HEK293 (cell line): ENCODE measurements at regions of chr20 and their contacts with region 1.

Region 1: DNA sequence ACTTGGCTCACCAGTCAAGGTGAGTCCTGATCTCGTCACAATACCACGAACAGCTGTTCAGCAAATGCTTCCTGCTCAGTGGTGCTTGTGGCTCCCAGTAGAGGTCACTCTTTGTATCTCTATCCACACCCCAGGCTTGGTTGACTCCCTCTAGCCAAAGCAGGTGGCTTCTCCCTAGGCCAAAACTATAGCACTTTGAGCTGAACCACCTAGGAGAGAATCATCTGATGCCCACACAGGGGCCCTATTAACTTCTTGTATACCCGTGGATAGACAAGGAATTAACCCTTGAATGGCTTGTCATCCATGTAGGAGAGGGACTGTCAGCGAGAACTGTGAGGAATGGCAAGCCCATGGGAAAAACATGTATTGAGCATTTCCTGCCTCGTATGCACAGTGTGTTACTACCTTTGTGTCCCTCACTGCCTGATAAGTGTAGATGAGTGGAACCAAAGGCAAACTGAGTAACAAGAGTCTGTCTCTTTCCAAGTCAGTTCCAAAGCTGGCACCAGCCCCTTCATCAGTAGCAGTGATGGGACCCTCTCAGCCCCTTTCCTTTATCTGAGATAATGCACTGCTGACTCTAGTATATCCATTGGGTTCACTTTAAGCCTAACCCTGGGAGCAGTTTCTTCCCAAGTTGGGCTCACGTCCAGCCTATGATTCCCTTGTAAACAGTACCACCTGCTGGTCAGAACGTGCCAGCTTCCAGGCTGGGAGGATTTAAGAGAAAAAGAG is 42.5 kb downstream of the EIF2S2 start:
- H3K4me3 ChIP-seq: no peak overlapping the region
- H3K27ac ChIP-seq: no peak overlapping the region
- H3K4me1 ChIP-seq: no peaks in the 10 kb centered on the region
- CTCF ChIP-seq: peak; percentile 62; the same call in 1 of the 2 replicates

Region 2: DNA sequence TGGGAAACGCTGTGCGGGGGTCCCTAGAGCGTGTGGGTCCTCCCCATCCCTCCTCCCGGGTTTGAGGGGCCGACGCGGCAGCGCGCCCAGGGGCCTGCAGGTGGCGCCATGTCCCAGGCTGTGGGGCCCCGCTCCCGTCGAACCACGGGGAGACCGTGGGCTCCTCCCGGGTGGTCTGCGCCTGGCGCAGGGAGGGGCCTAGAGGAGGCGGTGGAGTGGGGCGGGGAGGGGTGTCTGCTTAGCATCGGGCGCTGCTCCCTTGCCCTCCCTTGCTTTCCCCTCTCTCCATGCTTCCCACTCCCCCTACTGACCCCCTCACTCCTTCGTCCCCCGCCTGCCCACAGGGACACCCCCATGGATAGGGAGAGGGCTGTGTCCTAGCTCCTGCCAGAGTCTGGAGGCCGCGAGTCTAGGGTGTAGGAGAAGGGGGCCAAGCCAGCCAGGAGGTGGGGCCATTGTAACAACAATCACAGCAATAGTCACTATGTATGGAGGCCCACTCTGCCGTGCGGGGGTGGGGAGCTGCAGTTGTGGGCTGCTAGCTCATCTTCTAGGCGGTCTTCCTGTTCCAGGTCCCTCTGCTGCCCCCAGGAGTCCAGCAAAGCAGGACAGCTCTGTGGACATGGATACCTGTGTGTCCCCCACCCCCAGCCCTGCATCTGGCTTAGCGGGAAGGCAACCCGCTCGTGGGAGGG is 206.7 kb before region 1 on chr20:
- CTCF ChIA-PET with region 1: interaction called, 43 read pairs
- POLR2A ChIA-PET with region 1: no interaction called
- H3K4me3 ChIP-seq: no peak overlapping the region
- H3K27ac ChIP-seq: no peak overlapping the region
- H3K4me1 ChIP-seq: no peaks in the 10 kb centered on the region
- CTCF ChIP-seq: peak; percentile 77

Region 3: DNA sequence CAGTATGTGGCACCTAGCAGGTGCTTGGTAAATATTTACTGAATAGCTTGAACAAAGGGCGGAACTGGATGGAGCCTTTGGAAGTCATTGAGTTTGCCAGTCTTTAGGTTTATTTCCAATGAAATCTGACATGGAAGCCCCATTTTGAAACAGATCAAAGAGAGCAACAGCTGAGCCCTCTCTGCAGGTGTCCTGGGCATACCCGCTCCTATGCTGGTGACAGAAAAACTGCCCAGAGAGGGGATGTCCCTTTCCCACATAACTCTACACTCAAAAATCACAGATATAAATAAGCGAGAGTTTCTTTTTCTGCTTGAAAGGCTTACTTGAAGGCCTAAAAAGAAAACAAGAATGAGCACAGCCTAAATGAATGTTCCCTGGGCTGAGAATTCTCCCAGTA is 128.8 kb before region 1 on chr20:
- CTCF ChIA-PET with region 1: interaction called, 11 read pairs
- POLR2A ChIA-PET with region 1: no interaction called
- H3K4me3 ChIP-seq: no peak overlapping the region
- H3K27ac ChIP-seq: no peak overlapping the region
- H3K4me1 ChIP-seq: no peaks in the 10 kb centered on the region
- CTCF ChIP-seq: no peak

Region 4: DNA sequence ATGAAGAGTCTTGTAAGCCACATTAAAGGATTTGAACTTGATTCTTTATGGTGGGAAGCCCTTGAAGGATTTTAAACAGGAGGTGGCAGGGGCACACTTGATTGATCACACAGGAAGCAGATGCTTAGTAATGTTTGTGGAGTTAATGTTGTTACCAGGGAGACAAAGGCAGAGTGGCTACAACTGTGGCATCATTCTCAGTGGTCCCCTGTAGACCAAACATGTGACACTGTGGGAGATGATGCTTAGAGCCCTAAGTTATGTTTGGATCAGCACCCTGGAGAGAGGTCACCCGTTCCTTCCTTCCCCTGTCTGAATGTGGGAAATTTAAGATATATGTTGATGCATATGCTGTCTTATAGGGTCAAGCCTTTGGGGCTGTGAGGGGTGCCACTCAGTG is 10.7 kb before region 1 on chr20:
- CTCF ChIA-PET with region 1: interaction called, 10 read pairs
- POLR2A ChIA-PET with region 1: no interaction called
- H3K4me3 ChIP-seq: no peak overlapping the region
- H3K27ac ChIP-seq: no peak overlapping the region
- H3K4me1 ChIP-seq: no peaks in the 10 kb centered on the region
- CTCF ChIP-seq: no peak